Activated CD4-positive, alpha-beta memory T cell treated with anti-CD3 and anti-CD28 coated beads, Interleukin-2, amount 10 ng/mL, durations not matched to agents 7 days and 5 days (primary cell): ENCODE measurements at regions of chr7 and their contacts with region 1.

Region 1: DNA sequence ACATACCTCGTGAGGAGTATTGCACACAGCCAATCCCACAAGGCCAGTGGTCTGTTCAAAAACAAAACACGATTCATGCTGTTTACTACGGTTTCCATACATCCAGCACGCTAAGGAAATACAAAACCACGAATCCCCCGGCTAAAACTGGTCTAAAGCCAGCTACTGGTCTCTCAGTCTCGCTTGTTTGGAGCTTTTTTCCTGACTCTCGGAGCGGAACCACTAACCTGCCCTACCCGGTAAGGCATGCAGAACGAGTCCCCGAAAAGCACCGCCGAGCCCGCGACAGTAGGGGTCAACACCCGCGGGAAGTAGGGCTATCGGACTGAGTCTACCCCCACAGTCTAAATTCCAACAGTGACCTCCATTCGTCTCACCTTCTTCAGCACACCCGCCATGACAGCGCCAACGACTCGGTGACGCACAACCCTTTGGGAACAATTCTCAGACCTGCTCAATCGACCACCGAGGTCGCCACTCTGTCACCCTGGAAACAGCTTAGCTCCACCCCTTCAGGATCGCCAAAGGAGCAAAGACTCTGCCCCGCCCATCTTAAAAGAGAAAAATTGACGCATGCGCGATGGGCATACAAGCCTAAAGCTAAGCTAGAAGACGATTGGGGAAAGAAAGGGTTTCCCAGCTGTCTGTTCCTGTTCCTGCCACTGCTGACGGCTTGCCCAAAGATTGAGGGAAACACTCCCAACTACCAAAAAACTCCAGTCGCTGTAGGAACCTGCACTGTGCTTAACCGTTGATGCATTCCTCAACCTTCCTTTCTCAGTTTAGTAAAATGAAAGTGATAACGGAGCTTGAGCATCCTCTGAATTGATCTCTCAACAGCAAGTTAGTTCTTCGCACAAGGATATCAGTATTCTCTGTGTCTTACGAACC is at the start of gene NDUFA5:
- DNase-seq: peak; percentile 96
- H3K4me3 Mint-ChIP-seq: no peak within 1 kb of the TSS
- H3K27ac Mint-ChIP-seq: no peak within 1 kb of the TSS
- H3K4me1 Mint-ChIP-seq: peaks cover 2% of the 10 kb centered on the region
- H3K27me3 Mint-ChIP-seq: peaks cover 2% of the 10 kb centered on the region
- total RNA-seq, gene NDUFA5: 52.7 to 54.0 TPM

Region 2: DNA sequence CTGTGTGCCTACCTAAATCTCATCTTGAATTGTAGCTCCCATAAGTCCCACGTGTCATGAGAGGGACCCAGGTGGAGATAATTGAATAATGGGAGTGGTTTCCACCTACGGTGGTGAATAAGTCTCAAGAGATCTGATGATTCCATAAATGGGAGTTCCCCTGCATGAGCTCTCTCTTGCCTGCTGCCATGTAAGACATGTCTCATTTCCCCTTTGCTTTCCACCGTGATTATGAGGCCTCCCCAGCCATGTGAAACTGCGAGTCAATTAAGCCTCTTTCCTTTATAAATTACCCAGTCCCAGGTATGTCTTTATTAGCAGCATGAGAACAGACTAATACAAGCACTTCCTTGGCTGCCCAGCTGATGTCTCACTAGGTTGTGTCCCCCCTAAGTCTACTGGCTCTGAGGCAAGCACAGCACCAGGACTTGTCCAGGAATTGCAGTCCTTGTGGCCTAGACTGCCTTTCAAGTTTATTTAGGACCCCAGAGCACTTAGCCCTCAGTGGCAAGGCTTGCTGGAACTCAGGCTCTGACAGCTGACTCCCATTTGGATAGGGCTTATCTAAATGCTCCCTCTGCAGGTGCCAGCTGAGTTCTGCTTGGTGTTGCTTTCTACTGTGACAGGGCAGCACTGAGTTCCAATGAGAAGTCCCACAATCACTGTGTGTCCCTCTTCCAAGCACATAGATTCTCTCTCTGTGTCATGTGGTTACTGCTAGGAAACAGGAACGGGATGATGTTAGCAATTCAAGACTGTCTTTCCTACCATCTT is 503.1 kb before region 1 on chr7:
- CTCF ChIA-PET with region 1: no interaction called
- POLR2A ChIA-PET with region 1: no interaction called
- DNase-seq: no peak
- H3K4me3 Mint-ChIP-seq: no peak overlapping the region
- H3K27ac Mint-ChIP-seq: no peak overlapping the region
- H3K4me1 Mint-ChIP-seq: no peaks in the 10 kb centered on the region
- H3K27me3 Mint-ChIP-seq: no peaks in the 10 kb centered on the region

Region 3: DNA sequence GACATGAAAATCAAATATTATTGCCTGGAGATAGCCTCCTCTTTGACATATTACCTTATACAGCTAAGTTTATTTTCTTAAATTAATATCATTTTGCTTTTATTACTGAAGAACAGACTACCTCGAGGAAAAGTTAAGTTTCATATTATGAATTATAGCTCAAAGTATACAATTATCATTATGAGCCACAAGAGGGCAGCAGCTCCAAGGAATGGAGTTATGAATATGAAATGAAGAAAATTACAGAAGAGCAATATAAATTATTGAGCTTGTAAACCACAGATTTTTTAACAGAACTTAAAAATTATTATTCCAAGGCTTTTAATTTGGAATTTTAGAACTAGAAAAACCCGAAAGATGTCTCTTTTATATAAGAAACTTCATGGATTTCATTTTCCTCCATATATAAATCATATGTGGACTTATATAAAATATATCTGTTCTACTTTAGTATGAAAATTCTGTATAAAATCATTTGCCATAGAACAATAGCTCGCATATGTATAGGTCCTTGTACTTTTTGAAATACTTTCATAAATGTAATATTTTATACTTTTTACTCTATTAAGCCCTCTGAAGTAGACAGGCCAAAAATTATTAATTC is 63.3 kb before region 1 on chr7:
- CTCF ChIA-PET with region 1: interaction called, 17 read pairs
- POLR2A ChIA-PET with region 1: interaction called, 3 read pairs
- DNase-seq: no peak
- H3K4me3 Mint-ChIP-seq: no peak overlapping the region
- H3K27ac Mint-ChIP-seq: no peak overlapping the region
- H3K4me1 Mint-ChIP-seq: no peaks in the 10 kb centered on the region
- H3K27me3 Mint-ChIP-seq: peaks cover 9% of the 10 kb centered on the region

Region 4: DNA sequence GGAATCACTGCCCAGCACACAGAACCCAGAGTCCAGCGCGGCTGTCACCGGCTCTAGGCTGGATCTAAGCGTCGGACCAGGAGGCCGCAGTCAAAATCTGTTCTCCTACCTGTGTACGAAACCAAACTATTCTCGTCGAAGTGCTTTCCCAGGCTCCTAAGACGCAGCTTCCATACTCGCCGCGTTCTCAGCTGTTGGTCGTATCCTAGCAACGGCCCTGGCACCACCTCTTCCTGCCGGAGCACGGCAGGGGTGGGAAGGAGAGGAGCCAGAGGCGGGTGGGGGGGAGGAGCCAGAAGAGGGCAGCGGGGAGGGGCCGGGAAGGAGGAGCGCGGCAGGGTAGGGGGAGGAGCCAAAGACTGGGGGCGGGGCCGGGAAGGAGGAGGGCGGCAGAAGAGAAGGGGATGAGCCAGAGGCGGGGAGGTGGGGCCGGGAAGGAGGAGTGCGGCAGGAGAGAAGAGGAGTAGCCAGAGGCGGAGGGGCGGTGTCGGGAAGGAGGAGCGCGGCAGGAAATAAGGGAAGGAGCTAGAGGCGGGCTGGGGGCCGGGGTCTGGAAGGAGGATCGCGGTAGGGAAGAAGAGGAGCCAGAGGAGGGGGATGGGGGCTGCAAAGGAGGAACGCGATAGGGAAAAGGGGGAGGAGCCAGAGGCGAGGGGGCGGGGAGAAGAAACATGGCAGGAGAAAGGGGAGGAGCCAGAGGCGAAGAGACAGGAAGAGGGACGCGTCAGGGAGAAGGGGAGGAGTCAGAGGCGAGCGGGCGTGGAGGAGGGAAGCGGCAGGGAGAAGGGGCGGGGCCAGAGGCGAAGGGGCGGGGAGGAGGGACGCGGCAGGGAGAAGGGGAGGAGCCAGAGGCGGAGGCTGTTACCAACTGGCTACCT is 23.0 kb before region 1 on chr7 and contains the start of gene IQUB:
- CTCF ChIA-PET with region 1: interaction called, 15 read pairs
- POLR2A ChIA-PET with region 1: interaction called, 6 read pairs
- DNase-seq: peak; percentile 96
- H3K4me3 Mint-ChIP-seq: peak within 1 kb of the TSS; percentile 89
- H3K27ac Mint-ChIP-seq: peak within 1 kb of the TSS; percentile 77
- H3K4me1 Mint-ChIP-seq: peaks cover 27% of the 10 kb centered on the region
- H3K27me3 Mint-ChIP-seq: peaks cover 22% of the 10 kb centered on the region
- total RNA-seq, gene IQUB: not detected

Region 5: DNA sequence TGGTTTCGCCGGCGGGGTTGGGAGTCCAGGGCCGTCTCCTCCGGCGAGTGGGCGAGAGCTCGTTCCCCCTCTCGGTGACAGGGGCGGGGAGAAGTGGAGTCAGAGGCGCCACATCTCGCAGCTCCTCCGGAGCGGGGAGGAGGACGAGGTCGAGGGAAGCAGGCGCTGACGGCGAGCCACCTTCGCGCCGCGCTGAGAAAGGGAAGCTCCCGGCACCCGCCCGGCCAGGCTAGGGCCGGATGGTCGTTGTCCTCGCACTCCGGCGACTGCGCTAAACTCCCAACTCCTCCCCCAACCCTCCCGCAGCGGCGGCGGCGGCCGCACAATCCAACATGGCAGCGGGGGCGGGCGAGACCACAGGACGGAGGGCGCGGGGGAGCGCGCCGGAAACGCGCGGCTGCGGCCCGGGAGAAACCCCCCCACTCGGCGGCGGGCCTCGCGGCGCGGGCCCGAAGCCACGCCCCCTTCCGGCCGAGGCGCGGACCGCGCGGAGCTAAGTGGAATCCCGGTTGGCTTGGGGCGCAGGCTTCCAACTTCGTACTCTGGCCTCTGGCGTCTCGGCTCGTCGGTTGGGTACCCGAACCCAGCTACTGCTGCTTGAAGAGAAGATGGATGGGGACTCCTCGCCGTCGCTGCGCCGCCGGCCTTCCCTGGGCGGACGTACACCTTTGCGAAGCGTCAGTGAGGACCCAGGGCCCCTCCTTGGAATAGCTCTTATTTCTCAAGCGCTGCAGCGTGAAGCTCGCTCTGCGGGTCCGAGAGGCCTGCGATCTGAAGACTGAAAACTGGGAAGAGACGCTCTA is 191.3 kb after region 1 on chr7 and contains the start of gene WASL:
- CTCF ChIA-PET with region 1: interaction called, 3 read pairs
- POLR2A ChIA-PET with region 1: interaction called, 10 read pairs
- DNase-seq: peak; percentile 88
- H3K4me3 Mint-ChIP-seq: peak within 1 kb of the TSS; percentile 100
- H3K27ac Mint-ChIP-seq: peak within 1 kb of the TSS; percentile 90
- H3K4me1 Mint-ChIP-seq: peaks cover 35% of the 10 kb centered on the region
- H3K27me3 Mint-ChIP-seq: no peaks in the 10 kb centered on the region
- total RNA-seq, gene WASL: 7.1 to 7.3 TPM